Left lung (tissue), 14 donors: ENCODE measurements at regions of chr1 and their contacts with region 1.

Region 1: GRCh38 chr1:241895013-241895412 is 47.0 kb downstream of the EXO1 start:
- DNase-seq: no peak
- ATAC-seq: no peak
- H3K4me3 ChIP-seq: no peak overlapping the region
- H3K27ac ChIP-seq: no peak overlapping the region
- H3K4me1 ChIP-seq: no peaks in the 10 kb centered on the region
- H3K27me3 ChIP-seq: no peaks in the 10 kb centered on the region
- CTCF ChIP-seq: no peak

Region 2: DNA sequence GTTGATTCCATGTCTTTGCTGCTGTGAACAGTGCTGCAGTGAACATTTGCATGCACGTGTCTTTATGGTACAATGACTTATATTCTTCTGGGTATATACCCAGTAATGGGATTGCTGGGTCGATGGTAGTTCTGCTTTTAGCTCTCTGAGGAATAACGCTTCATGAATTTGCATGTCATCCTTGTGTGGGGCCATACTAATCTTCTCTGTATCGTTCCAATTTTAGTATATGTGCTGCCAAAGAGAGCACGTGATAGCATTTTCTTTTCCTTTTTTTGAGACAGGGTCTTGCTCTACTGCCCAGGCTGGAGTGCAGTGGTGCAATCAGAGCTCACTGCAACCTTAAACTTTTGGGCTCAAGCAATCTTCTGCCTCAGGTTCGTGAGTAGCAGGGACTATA is 128.8 kb after region 1 on chr1:
- intact Hi-C with region 1: loop called in 1 of 2 experiments (anchors 10 kb)
- DNase-seq: no peak
- ATAC-seq: no peak
- H3K4me3 ChIP-seq: no peak overlapping the region
- H3K27ac ChIP-seq: no peak overlapping the region
- H3K4me1 ChIP-seq: no peaks in the 10 kb centered on the region
- H3K27me3 ChIP-seq: no peaks in the 10 kb centered on the region
- CTCF ChIP-seq: no peak